Naive thymus-derived CD4-positive, alpha-beta T cell (primary cell): ENCODE measurements at regions of chrX and their contacts with region 1.

Region 1: GRCh38 chrX:79366873-79367749 is at the start of gene ITM2A:
- DNase-seq: peak; percentile 31 to 75 (median 62)
- ATAC-seq: peak; percentile 86
- H3K4me3 ChIP-seq: peak within 1 kb of the TSS; percentile 93
- H3K4me3 Mint-ChIP-seq: peak within 1 kb of the TSS; percentile 89 to 99 (median 95)
- H3K27ac ChIP-seq: peak within 1 kb of the TSS; percentile 89
- H3K27ac Mint-ChIP-seq: peak within 1 kb of the TSS; percentile 92 to 99 (median 98)
- H3K4me1 ChIP-seq: peaks cover 7 to 13% of the 10 kb centered on the region in 2 donors
- H3K4me1 Mint-ChIP-seq: peaks cover 7 to 39% (median 31%) of the 10 kb centered on the region in 7 donors
- H3K27me3 ChIP-seq: no peaks in the 10 kb centered on the region
- H3K27me3 Mint-ChIP-seq: no peaks in the 10 kb centered on the region
- total RNA-seq, gene ITM2A: 109 to 170 (median 154) TPM

Region 2: DNA sequence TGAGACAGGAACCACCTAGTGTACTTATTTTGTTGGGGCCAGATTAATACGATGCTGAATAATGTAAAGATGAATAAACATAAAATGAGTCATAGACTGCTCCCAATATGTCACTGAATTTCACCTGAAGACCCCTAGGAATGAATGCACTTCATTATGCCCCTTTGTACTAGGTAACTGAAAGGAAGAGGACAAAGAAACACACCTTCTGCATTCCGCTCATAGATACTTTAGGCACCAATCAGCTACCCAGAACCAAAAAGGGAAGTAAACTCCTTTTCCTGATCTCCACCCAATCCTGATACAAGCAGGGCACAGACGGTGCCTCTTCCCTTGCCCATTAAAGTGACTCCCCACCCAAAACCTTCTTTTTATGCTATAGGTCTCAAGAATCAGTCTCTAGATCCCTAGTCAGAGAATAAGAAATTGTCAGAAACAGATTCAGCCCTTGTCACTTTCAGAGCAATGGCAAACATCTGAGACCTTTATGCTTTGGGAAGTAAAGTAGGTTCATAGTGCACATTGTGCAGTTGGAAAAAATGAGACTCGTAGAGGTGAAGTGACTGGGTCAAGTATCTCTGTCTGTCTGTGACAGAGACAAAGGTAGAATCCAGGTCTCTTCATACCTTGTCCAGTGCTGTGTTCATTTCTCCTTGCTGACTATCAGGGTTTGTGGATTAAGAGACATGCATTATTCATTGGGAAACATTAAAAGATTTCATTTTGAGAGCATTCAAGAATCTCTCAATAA is 220.3 kb before region 1 on chrX:
- CTCF ChIA-PET with region 1: no interaction called
- POLR2A ChIA-PET with region 1: interaction called, 8 read pairs
- intact Hi-C with region 1: loop called (anchors 5 kb)
- DNase-seq: no peak
- ATAC-seq: peak; percentile 64
- H3K4me3 ChIP-seq: peak overlapping the region; percentile 71
- H3K4me3 Mint-ChIP-seq: peak overlapping the region; percentile 66 to 96 (median 92)
- H3K27ac ChIP-seq: peak overlapping the region; percentile 85
- H3K27ac Mint-ChIP-seq: peak overlapping the region; percentile 82 to 98 (median 91)
- H3K4me1 ChIP-seq: peaks cover 10 to 16% of the 10 kb centered on the region in 2 donors
- H3K4me1 Mint-ChIP-seq: peaks cover 10 to 47% (median 28%) of the 10 kb centered on the region in 7 donors
- H3K27me3 ChIP-seq: no peaks in the 10 kb centered on the region
- H3K27me3 Mint-ChIP-seq: no peaks in the 10 kb centered on the region

Region 3: DNA sequence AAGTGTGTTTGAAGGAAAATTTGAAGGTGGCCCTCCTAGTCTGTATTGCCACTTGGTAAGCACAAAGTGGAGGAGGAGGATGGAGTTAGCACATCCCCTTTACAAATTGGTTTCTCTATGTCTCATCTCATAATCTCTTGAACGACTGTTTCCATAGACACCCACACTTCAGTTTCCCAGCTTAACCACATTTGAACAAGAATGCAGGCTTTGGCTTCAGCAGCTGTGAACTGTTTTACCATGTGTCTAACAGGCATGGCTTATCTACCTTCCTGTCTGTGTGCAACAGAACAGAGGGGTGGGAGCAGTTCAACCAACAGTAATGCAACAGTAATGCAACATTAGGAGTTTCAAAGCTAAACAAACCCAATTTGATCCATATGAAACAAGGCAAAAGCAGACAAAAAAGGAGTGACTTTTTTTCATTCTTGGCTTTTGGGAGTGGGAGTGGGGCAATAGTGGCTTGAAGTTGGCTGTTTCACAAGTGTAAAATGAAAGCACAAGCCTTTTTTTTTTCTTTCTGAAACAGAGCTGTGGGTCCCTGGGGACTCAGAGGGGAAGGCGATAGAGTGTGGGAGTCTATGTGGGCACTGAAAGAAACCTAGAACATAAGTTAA is 107.9 kb before region 1 on chrX:
- CTCF ChIA-PET with region 1: no interaction called
- POLR2A ChIA-PET with region 1: interaction called, 6 read pairs
- intact Hi-C with region 1: loop called in 1 of 2 experiments (anchors 5 kb)
- DNase-seq: peak; percentile 4 to 84 (median 74)
- ATAC-seq: peak; percentile 95
- H3K4me3 ChIP-seq: peak overlapping the region; percentile 23
- H3K4me3 Mint-ChIP-seq: peak overlapping the region; percentile 10 to 86 (median 79)
- H3K27ac ChIP-seq: peak overlapping the region; percentile 78
- H3K27ac Mint-ChIP-seq: peak overlapping the region; percentile 83 to 98 (median 94)
- H3K4me1 ChIP-seq: peaks cover 52 to 65% of the 10 kb centered on the region in 2 donors
- H3K4me1 Mint-ChIP-seq: peaks cover 26 to 90% (median 82%) of the 10 kb centered on the region in 7 donors
- H3K27me3 ChIP-seq: no peaks in the 10 kb centered on the region
- H3K27me3 Mint-ChIP-seq: no peaks in the 10 kb centered on the region

Region 4: DNA sequence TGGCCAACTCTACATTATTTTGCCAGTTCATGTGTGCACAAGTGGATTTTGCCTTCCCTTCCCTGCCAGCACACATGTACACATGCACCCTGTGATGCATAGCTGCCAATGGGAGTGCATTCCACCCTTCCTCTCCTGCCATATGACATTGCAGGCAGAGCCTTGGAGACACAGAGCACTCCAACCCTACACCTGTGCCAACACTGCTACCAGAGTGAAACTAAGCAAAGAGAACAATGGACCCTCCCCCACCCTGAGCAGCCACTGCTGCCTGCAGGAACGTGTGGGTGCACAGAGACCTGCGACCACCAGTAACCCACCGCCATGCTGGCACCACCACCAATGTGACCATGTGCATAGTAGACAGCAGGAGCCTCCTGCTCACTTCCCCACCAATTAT is 78.4 kb before region 1 on chrX:
- CTCF ChIA-PET with region 1: interaction called, 3 read pairs
- POLR2A ChIA-PET with region 1: no interaction called
- intact Hi-C with region 1: loop called in 1 of 2 experiments (anchors 5 kb)
- DNase-seq: no peak
- ATAC-seq: no peak
- H3K4me3 ChIP-seq: no peak overlapping the region
- H3K4me3 Mint-ChIP-seq: peak overlapping the region in 8 of 10 donors; percentile 7 to 83 (median 49)
- H3K27ac ChIP-seq: no peak overlapping the region
- H3K27ac Mint-ChIP-seq: peak overlapping the region in 6 of 9 donors; percentile 35 to 93 (median 62)
- H3K4me1 ChIP-seq: no peaks in the 10 kb centered on the region
- H3K4me1 Mint-ChIP-seq: peaks cover 15 to 57% (median 48%) of the 10 kb centered on the region in 7 donors
- H3K27me3 ChIP-seq: no peaks in the 10 kb centered on the region
- H3K27me3 Mint-ChIP-seq: no peaks in the 10 kb centered on the region

Region 5: GRCh38 chrX:79336869-79337815 is 30.0 kb before region 1 on chrX:
- CTCF ChIA-PET with region 1: interaction called, 3 read pairs
- POLR2A ChIA-PET with region 1: interaction called, 3 read pairs
- intact Hi-C with region 1: loop called in 1 of 2 experiments (anchors 2 kb)
- DNase-seq: peak in 7 of 9 donors; percentile 14 to 58 (median 34)
- ATAC-seq: peak; percentile 71
- H3K4me3 ChIP-seq: peak overlapping the region; percentile 51
- H3K4me3 Mint-ChIP-seq: peak overlapping the region; percentile 56 to 89 (median 84)
- H3K27ac ChIP-seq: peak overlapping the region; percentile 72
- H3K27ac Mint-ChIP-seq: peak overlapping the region; percentile 85 to 97 (median 91)
- H3K4me1 ChIP-seq: peaks cover 0 to 4% of the 10 kb centered on the region in 2 donors
- H3K4me1 Mint-ChIP-seq: peaks cover 2 to 36% (median 23%) of the 10 kb centered on the region in 7 donors
- H3K27me3 ChIP-seq: no peaks in the 10 kb centered on the region
- H3K27me3 Mint-ChIP-seq: no peaks in the 10 kb centered on the region

Region 6: DNA sequence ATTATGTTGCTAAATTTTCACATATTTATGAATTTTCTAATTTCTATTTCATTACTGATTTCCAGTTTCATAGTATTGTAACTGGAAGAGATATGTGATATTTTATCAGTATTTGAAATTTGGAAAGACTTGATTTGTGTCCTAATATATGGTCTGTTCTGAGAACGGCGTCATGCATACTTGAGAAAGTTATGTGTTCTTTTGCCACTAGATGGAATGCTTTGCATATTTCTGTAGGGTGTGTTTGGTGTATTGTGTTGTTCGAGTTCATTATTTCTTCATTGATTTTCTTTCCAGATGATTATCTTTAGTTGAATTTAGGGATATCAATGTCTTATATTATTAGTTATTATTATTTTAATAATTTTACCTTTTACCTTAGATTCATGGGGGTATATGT is 110.6 kb after region 1 on chrX:
- CTCF ChIA-PET with region 1: no interaction called
- POLR2A ChIA-PET with region 1: no interaction called
- intact Hi-C with region 1: no loop called
- DNase-seq: no peak
- ATAC-seq: no peak
- H3K4me3 ChIP-seq: no peak overlapping the region
- H3K4me3 Mint-ChIP-seq: no peak overlapping the region
- H3K27ac ChIP-seq: no peak overlapping the region
- H3K27ac Mint-ChIP-seq: no peak overlapping the region
- H3K4me1 ChIP-seq: no peaks in the 10 kb centered on the region
- H3K4me1 Mint-ChIP-seq: no peaks in the 10 kb centered on the region
- H3K27me3 ChIP-seq: no peaks in the 10 kb centered on the region
- H3K27me3 Mint-ChIP-seq: peaks cover 3 to 21% (median 9%) of the 10 kb centered on the region in 5 donors

Region 7: GRCh38 chrX:80285131-80285773 is 918.1 kb after region 1 on chrX:
- CTCF ChIA-PET with region 1: no interaction called
- POLR2A ChIA-PET with region 1: no interaction called
- intact Hi-C with region 1: no loop called
- DNase-seq: peak in 1 of 9 donors; percentile 0
- ATAC-seq: no peak
- H3K4me3 ChIP-seq: no peak overlapping the region
- H3K4me3 Mint-ChIP-seq: no peak overlapping the region
- H3K27ac ChIP-seq: no peak overlapping the region
- H3K27ac Mint-ChIP-seq: no peak overlapping the region
- H3K4me1 ChIP-seq: no peaks in the 10 kb centered on the region
- H3K4me1 Mint-ChIP-seq: no peaks in the 10 kb centered on the region
- H3K27me3 ChIP-seq: no peaks in the 10 kb centered on the region
- H3K27me3 Mint-ChIP-seq: no peaks in the 10 kb centered on the region